ENCODE measurements at regions of chr2 and their contacts with region 1.

Region 1: GRCh38 chr2:219344751-219345430 is 12.3 kb upstream of the RESP18 start:
- DNase-seq: peak in 1 of 2 experiments; percentile 37
- H3K4me3 ChIP-seq: no peak overlapping the region
- H3K27ac ChIP-seq: no peak overlapping the region
- H3K4me1 ChIP-seq: 0 out of 2 replicates have a peak, but pooled peaks cover 4% of the 10 kb centered on the region
- H3K27me3 ChIP-seq: peaks cover 55% of the 10 kb centered on the region
- CTCF ChIP-seq: no peak

Region 2: DNA sequence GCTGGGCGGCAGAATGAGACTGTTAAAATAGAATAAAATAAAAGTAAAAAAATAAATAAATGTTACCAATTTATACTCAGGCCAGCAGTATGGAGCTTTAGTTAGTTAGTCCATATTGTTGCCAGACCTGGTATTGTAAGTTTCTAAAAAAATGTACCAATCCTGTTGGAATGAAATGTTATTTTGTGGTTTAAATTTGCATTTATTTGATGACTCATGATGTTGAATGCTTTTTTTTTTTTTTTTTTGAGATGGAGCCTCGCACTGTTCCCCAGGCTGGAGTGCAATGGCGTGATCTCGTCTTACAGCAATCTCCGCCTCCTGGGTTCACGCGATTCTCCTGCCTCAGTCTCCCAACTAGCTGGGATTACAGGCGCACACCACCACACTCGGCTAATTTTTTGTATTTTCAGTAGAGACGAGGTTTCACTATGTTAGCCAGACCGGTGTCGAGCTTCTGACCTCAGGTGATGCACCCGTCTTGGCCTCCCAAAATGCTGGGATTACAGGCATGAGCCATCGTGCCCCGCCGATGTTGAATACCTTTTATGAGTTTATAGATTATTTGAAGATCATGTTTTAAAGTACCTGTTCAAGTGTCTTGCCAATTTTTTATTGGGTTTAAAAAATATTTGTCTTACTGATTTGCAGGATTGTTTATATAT is 30.0 kb before region 1 on chr2:
- CTCF ChIA-PET with region 1: interaction called, 7 read pairs
- POLR2A ChIA-PET with region 1: no interaction called
- intact Hi-C with region 1: loop called (anchors 2 kb)
- DNase-seq: no peak
- H3K4me3 ChIP-seq: no peak overlapping the region
- H3K27ac ChIP-seq: no peak overlapping the region
- H3K4me1 ChIP-seq: no peaks in the 10 kb centered on the region
- H3K27me3 ChIP-seq: peaks cover 14% of the 10 kb centered on the region; the same call in 1 of the 2 replicates
- CTCF ChIP-seq: no peak

Region 3: GRCh38 chr2:219552382-219553167 is 207.7 kb after region 1 on chr2:
- CTCF ChIA-PET with region 1: no interaction called
- POLR2A ChIA-PET with region 1: no interaction called
- intact Hi-C with region 1: no loop called
- DNase-seq: peak; percentile 37 to 90
- H3K4me3 ChIP-seq: peak overlapping the region; percentile 57
- H3K27ac ChIP-seq: no peak overlapping the region
- H3K4me1 ChIP-seq: no peaks in the 10 kb centered on the region
- H3K27me3 ChIP-seq: no peaks in the 10 kb centered on the region
- CTCF ChIP-seq: no peak

Measured in PC-9 (cell line).